Mammary epithelial cell (primary cell): ENCODE measurements at regions of chr11 and their contacts with region 1.

Region 1: GRCh38 chr11:76444384-76445123 is at the start of gene EMSY:
- DNase-seq: peak; percentile 99
- H3K4me3 ChIP-seq: peak within 1 kb of the TSS; percentile 81 to 96 (median 83)
- H3K27ac ChIP-seq: peak within 1 kb of the TSS; percentile 98
- H3K4me1 ChIP-seq: peaks cover 10% of the 10 kb centered on the region
- H3K27me3 ChIP-seq: no peaks in the 10 kb centered on the region
- CTCF ChIP-seq: no peak
- total RNA-seq, gene EMSY: 16.1 to 19.8 TPM

Region 2: GRCh38 chr11:76380967-76381719 is 63.4 kb before region 1 on chr11 and contains the starts of genes GVQW3 and THAP12:
- CTCF ChIA-PET with region 1: no interaction called
- dilution Hi-C with region 1: loop called (anchors 5 kb)
- in situ Hi-C with region 1: no loop called
- intact Hi-C with region 1: loop called (anchors 1 kb)
- DNase-seq: peak; percentile 98
- H3K4me3 ChIP-seq: peak within 1 kb of the TSS; percentile 64 to 85 (median 66)
- H3K27ac ChIP-seq: peak within 1 kb of the TSS; percentile 63
- H3K4me1 ChIP-seq: peaks cover 9% of the 10 kb centered on the region
- H3K27me3 ChIP-seq: no peaks in the 10 kb centered on the region
- CTCF ChIP-seq: peak in 1 of 2 donors; percentile 20
- total RNA-seq, gene GVQW3: 0.75 to 1.3 TPM
- total RNA-seq, gene THAP12: 36.0 to 37.7 TPM

Region 3: DNA sequence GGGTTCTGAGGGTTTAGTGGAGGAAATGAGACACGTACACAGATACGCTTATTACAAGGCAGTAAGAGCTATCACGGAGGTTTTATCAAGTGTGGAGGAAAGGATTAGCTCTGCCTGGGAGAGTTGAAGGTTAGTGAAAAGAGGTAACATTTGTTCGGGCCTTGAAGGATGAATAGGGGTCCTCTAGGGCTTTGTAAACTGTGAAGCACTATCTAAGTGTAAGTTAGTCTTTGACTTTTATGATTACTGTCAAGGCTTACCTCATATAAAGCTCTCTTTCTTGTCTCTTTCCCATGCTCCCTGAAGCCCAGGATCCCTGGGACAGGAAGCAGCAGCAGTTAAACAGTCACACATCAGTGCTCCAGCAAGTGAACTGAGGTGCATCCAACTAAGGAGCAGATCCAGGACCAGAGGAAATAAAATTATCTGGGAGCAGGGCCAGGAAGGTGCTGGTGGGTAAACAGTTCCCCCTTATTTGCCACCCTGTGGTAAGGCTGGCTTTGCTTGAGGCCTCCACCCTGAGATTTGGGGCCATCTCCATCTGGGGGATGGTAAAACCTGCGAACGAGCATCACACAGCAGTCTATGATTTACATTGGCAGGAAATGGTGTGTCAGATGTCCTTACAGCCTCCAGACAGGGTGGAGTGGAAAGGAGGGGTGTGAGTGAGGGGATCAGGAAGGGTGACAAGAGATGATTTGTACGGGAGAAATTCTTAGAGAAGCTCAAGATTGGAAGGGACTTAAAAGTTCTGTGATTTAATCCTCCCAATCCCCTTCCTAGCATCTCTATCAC is 36.2 kb before region 1 on chr11:
- CTCF ChIA-PET with region 1: no interaction called
- dilution Hi-C with region 1: no loop called
- in situ Hi-C with region 1: no loop called
- intact Hi-C with region 1: no loop called
- DNase-seq: no peak
- H3K4me3 ChIP-seq: no peak overlapping the region
- H3K27ac ChIP-seq: no peak overlapping the region
- H3K4me1 ChIP-seq: no peaks in the 10 kb centered on the region
- H3K27me3 ChIP-seq: no peaks in the 10 kb centered on the region
- CTCF ChIP-seq: no peak